Right ventricle myocardium inferior (tissue), 1 donor: ENCODE measurements at regions of chr2 and their contacts with region 1.

Region 1: DNA sequence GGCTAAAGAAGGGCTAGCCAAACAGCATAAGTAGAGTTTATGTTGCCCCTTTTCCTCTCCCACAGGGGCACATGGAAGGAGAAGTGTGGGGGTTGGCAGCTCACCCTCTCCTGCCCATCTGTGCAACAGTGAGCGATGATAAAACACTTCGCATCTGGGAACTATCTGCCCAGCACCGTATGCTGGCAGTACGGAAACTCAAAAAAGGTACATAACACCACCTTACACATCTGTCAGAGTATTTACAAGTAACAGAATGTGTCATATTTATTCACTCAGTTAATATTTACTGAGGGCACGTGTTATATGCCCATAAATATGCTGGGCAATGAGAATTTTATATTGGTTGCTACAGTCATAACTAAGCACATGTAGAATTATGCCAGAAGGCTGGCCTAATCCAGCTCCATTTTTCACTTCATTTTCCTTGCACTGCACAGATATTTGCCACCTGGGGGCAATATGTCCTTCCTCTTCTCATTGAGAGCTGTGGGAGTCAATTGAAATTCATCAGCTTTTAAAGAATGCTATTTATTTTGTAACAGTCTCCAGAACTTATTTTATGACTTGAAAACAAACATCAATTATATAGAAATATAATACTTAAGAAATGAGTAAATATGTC is 150.6 kb downstream of the RTN4 start:
- DNase-seq: no peak
- ATAC-seq: peak; percentile 72

Region 2: GRCh38 chr2:55168221-55169154 is 268.8 kb after region 1 on chr2:
- intact Hi-C with region 1: loop called (anchors 5 kb)
- DNase-seq: no peak
- ATAC-seq: peak; percentile 82